Mammary epithelial cell (primary cell): ENCODE measurements at regions of chr4 and their contacts with region 1.

Region 1: GRCh38 chr4:112523764-112524505 is 8.0 kb upstream of the NEUROG2 start:
- DNase-seq: peak; percentile 67
- H3K4me3 ChIP-seq: peak overlapping the region; percentile 45 to 56 (median 49)
- H3K27ac ChIP-seq: no peak overlapping the region
- H3K4me1 ChIP-seq: peaks cover 4% of the 10 kb centered on the region
- H3K27me3 ChIP-seq: peaks cover 23% of the 10 kb centered on the region
- CTCF ChIP-seq: peak; percentile 55 to 87

Region 2: GRCh38 chr4:112075129-112075753 is 448.7 kb before region 1 on chr4:
- CTCF ChIA-PET with region 1: no interaction called
- dilution Hi-C with region 1: no loop called
- in situ Hi-C with region 1: loop called in 1 of 2 experiments (anchors 25 kb)
- intact Hi-C with region 1: loop called (anchors 5 kb)
- DNase-seq: peak; percentile 59
- H3K4me3 ChIP-seq: no peak overlapping the region
- H3K27ac ChIP-seq: no peak overlapping the region
- H3K4me1 ChIP-seq: peaks cover 4% of the 10 kb centered on the region
- H3K27me3 ChIP-seq: no peaks in the 10 kb centered on the region
- CTCF ChIP-seq: peak; percentile 74 to 81

Region 3: GRCh38 chr4:112214390-112215264 is 309.3 kb before region 1 on chr4:
- CTCF ChIA-PET with region 1: no interaction called
- dilution Hi-C with region 1: no loop called
- in situ Hi-C with region 1: no loop called
- intact Hi-C with region 1: loop called (anchors 1 kb)
- DNase-seq: peak; percentile 21
- H3K4me3 ChIP-seq: no peak overlapping the region
- H3K27ac ChIP-seq: peak overlapping the region; percentile 5
- H3K4me1 ChIP-seq: peaks cover 12% of the 10 kb centered on the region
- H3K27me3 ChIP-seq: no peaks in the 10 kb centered on the region
- CTCF ChIP-seq: peak; percentile 31 to 57

Region 4: DNA sequence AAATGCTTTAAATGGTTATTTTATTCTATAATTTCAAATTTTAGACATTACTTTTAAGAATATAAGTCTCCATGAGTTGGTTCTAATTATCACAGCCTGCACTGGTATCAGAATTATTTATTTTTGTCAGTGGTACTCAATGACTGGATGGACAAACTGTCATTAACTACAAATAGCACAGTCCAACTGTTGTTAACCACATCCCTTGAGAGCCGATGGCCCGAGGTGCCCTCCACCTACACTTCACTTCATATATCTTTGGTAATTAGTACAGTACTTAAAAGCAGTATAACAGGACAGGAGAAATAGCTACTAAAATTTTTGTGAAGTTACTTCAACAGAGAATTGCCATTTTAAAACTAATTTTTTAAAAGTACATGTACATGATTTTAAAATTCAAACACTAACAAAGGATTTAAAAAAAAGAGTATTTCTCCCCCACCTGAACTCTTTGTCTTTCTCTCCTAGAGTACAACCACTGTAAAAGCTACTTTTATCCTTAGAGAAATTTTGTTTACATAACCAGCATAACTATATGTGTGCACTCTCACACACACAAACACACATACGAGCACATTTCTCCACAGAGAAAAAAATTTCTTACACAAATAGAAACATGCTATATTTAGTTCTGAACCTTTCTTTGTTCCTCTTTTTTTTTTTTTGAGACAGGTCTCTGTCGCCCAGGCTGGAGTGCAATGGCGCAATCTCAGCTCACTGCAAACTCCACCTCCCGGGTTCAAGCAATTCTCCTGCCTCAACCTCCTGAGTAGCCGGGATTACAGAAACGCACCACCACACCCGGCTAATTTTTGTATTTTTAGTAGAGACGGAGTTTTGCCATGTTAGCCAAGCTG is 244.7 kb before region 1 on chr4:
- CTCF ChIA-PET with region 1: no interaction called
- dilution Hi-C with region 1: no loop called
- in situ Hi-C with region 1: no loop called
- intact Hi-C with region 1: loop called (anchors 2 kb)
- DNase-seq: no peak
- H3K4me3 ChIP-seq: peak overlapping the region; percentile 35 to 40 (median 38)
- H3K27ac ChIP-seq: peak overlapping the region; percentile 36
- H3K4me1 ChIP-seq: peaks cover 38% of the 10 kb centered on the region
- H3K27me3 ChIP-seq: no peaks in the 10 kb centered on the region
- CTCF ChIP-seq: no peak

Region 5: GRCh38 chr4:112327965-112328733 is 195.8 kb before region 1 on chr4:
- CTCF ChIA-PET with region 1: no interaction called
- dilution Hi-C with region 1: loop called (anchors 25 kb)
- in situ Hi-C with region 1: loop called in 1 of 2 experiments (anchors 25 kb)
- intact Hi-C with region 1: loop called (anchors 1 kb)
- DNase-seq: peak; percentile 45
- H3K4me3 ChIP-seq: no peak overlapping the region
- H3K27ac ChIP-seq: no peak overlapping the region
- H3K4me1 ChIP-seq: no peaks in the 10 kb centered on the region
- H3K27me3 ChIP-seq: no peaks in the 10 kb centered on the region
- CTCF ChIP-seq: peak; percentile 45 to 54

Region 6: GRCh38 chr4:112604589-112604988 is 80.7 kb after region 1 on chr4:
- CTCF ChIA-PET with region 1: interaction called, 4 read pairs
- dilution Hi-C with region 1: no loop called
- in situ Hi-C with region 1: no loop called
- intact Hi-C with region 1: loop called (anchors 1 kb)
- DNase-seq: peak; percentile 35
- H3K4me3 ChIP-seq: no peak overlapping the region
- H3K27ac ChIP-seq: no peak overlapping the region
- H3K4me1 ChIP-seq: no peaks in the 10 kb centered on the region
- H3K27me3 ChIP-seq: no peaks in the 10 kb centered on the region
- CTCF ChIP-seq: peak; percentile 45 to 73